ENCODE measurements at regions of chr6 and their contacts with region 1.

Region 1: DNA sequence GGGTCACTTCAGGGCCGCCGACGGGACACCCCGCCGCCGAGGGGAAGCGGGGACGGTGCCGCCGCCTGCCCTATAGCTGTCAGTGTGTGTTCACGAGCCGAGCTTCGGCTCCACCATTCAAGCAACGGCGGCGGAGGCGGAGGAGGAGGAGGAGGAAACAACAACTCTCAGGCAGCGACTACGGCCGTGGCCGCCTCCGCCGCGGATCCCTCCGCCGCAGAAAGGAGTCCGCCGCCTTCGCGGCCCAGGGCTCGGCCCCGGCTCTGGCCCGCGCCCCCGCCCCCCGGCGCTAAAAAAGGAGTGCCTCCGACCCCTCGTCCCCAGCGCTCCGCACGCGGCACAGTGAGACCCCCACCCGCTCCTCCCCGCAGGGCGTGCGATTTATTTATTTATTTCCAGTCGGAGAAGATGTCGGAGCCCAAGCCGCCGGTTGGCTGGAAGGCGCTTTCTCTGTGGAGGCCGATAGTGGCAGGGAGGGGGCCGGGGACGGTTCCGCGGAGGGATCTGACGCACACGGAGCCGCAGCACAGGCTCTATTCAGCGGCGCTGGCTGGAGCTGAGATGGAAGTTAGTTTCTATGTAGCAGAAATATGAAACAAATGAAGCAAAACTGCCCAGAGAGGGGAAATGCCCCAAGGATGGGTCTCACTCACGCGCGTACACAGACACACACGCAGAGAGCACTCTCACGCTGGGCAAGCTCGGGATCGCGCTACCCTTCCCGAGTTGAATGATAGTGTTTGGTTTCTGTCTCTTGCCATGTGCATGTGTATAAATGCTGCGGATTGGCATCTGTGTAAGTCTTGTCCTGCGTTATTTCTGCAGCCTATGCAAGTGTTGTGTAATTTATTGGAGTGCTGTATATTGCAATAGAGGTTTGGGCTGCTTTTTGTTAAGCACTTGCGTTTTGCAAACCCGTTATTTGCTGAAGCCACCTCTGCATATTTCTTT is at the start of gene PHIP:
- DNase-seq: peak; percentile 59 to 96
- H3K4me3 ChIP-seq: peak within 1 kb of the TSS; percentile 88 to 98 (median 94)
- H3K27ac ChIP-seq: peak within 1 kb of the TSS; percentile 93
- H3K4me1 ChIP-seq: peaks cover 0 to 12% (median 0%) of the 10 kb centered on the region in 4 experiments; a peak in 1 of 7 replicates
- H3K27me3 ChIP-seq: peaks cover 0 to 1% (median 0%) of the 10 kb centered on the region in 4 experiments; a peak in 1 of 7 replicates
- CTCF ChIP-seq: no peak
- EP300 ChIP-seq: peak in 1 of 2 experiments; percentile 47; a peak in 1 of 3 replicates
- POLR2A ChIP-seq: peak; percentile 84 to 89
- RAD21 ChIP-seq: no peak
- total RNA-seq, gene PHIP: 54.2 and 56.2 TPM in 2 replicates

Region 2: DNA sequence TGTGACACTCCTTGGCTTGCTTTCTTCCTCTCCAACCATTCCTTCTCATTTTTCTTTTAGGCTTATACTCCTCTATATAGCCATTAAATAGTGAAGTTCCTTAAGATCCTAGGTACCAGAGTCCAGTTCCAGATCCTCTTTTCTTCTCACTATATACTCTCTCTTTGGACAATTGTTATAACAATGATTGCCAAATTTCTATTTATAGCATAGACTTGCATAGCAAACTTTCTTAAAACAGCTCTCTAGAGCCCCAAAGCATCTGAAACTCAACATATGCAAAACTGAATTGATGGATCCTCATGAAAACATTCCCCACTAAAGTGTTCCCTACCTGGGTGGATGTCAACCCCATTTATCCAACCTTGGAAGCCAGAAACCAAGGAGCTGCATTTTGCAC is 13.7 kb before region 1 on chr6:
- CTCF ChIA-PET with region 1: interaction called, 3 read pairs
- POLR2A ChIA-PET with region 1: interaction called, 20 read pairs
- DNase-seq: no peak
- H3K4me3 ChIP-seq: no peak overlapping the region
- H3K27ac ChIP-seq: no peak overlapping the region
- H3K4me1 ChIP-seq: no peaks in the 10 kb centered on the region
- H3K27me3 ChIP-seq: no peaks in the 10 kb centered on the region
- CTCF ChIP-seq: no peak
- EP300 ChIP-seq: no peak
- POLR2A ChIP-seq: no peak
- RAD21 ChIP-seq: no peak

Region 3: DNA sequence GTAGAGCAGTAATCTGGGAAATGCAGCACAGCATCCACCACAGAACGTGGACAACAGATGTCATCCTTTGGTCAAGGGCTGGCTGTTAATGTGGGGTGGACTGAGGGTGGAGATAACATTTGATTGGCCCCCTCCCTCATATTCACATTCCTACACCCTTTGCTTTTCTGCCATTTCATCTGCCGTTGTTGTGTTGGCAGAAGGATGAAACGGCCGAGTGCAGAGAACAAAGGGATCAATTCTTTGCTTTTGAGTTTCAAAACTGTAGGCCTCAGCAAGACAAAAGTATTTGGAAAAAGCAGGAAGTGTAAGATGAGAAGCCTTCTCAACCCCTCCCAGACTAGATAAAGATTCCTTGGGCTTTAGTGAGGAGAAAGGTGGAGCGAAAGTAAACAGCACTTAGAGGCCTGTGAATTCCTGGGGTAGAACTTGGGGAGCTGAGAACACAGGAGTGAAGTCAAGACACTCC is 74.0 kb after region 1 on chr6:
- CTCF ChIA-PET with region 1: no interaction called
- POLR2A ChIA-PET with region 1: interaction called, 13 read pairs
- DNase-seq: peak; percentile 61 to 88
- H3K4me3 ChIP-seq: peak overlapping the region in 1 of 4 experiments; percentile 31; a peak in 1 of 8 replicates
- H3K27ac ChIP-seq: peak overlapping the region; percentile 78
- H3K4me1 ChIP-seq: peaks cover 3 to 34% (median 16%) of the 10 kb centered on the region in 4 experiments; a peak in 6 of 7 replicates
- H3K27me3 ChIP-seq: no peaks in the 10 kb centered on the region
- CTCF ChIP-seq: no peak
- EP300 ChIP-seq: 0 out of 3 replicates have a peak, but pooled peaks of 1 of the 2 experiments have one; percentile 82
- POLR2A ChIP-seq: peak; percentile 45 to 79
- RAD21 ChIP-seq: 0 out of 4 replicates have a peak, but pooled peaks of 1 of the 2 experiments have one; percentile 3